ENCODE measurements at regions of chr1 and their contacts with region 1.

Region 1: GRCh38 chr1:18949686-18950400 is 6.6 kb downstream of the IFFO2 start:
- DNase-seq: peak; percentile 45
- H3K4me3 Mint-ChIP-seq: peak overlapping the region; percentile 75
- H3K27ac Mint-ChIP-seq: peak overlapping the region; percentile 93
- H3K4me1 Mint-ChIP-seq: peaks cover 95% of the 10 kb centered on the region
- H3K27me3 Mint-ChIP-seq: no peaks in the 10 kb centered on the region

Region 2: GRCh38 chr1:18965206-18966173 is 15.6 kb after region 1 on chr1:
- CTCF ChIA-PET with region 1: interaction called, 3 read pairs
- intact Hi-C with region 1: loop called (anchors 1 kb)
- DNase-seq: peak; percentile 86
- H3K4me3 Mint-ChIP-seq: no peak overlapping the region
- H3K27ac Mint-ChIP-seq: peak overlapping the region; percentile 77
- H3K4me1 Mint-ChIP-seq: peaks cover 12% of the 10 kb centered on the region
- H3K27me3 Mint-ChIP-seq: no peaks in the 10 kb centered on the region

Region 3: GRCh38 chr1:19010995-19011844 is 61.4 kb after region 1 on chr1:
- CTCF ChIA-PET with region 1: no interaction called
- intact Hi-C with region 1: loop called (anchors 1 kb)
- DNase-seq: peak; percentile 95
- H3K4me3 Mint-ChIP-seq: no peak overlapping the region
- H3K27ac Mint-ChIP-seq: peak overlapping the region; percentile 83
- H3K4me1 Mint-ChIP-seq: peaks cover 35% of the 10 kb centered on the region
- H3K27me3 Mint-ChIP-seq: no peaks in the 10 kb centered on the region

Region 4: DNA sequence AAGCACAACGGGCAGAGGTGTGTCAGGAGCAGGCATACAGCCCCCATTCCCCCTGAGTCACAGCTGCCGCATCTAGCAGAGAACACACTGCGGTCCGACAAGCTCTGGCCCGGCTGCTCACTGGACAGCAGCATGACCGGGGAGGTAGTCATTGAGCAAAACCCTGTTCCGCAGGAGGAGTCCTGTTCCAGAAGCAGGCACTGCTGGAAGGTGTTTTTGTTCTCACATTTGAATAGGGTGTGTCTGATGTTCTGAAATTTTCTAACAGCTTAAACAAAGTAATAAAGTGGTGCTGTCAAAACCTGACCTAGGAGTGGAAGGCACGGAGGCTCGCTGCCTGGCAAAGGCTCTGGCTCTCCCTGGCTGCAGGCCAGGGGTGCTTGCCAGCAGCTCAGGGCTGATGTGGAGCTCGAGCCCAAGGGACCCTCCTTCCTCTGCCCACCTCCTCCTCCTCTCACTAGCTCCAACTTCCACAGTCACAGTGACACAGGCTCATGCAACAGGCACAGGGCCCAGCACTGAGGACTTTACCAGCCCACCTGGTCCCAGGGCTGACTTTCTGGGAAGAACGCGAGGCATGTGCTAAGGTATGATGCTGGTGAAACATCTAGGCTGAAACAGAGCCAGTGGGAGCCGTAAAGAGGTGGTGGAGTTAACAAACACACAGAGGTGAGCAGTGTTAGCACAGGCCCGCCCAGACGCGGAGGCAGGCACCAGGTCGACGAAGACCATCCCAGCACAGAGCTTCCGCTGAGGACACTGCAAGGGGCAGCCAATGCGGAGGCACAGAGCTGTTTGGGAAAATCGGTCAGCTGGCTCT is 125.3 kb after region 1 on chr1:
- CTCF ChIA-PET with region 1: interaction called, 4 read pairs
- intact Hi-C with region 1: loop called (anchors 1 kb)
- DNase-seq: no peak
- H3K4me3 Mint-ChIP-seq: no peak overlapping the region
- H3K27ac Mint-ChIP-seq: peak overlapping the region; percentile 74
- H3K4me1 Mint-ChIP-seq: peaks cover 53% of the 10 kb centered on the region
- H3K27me3 Mint-ChIP-seq: no peaks in the 10 kb centered on the region

Region 5: DNA sequence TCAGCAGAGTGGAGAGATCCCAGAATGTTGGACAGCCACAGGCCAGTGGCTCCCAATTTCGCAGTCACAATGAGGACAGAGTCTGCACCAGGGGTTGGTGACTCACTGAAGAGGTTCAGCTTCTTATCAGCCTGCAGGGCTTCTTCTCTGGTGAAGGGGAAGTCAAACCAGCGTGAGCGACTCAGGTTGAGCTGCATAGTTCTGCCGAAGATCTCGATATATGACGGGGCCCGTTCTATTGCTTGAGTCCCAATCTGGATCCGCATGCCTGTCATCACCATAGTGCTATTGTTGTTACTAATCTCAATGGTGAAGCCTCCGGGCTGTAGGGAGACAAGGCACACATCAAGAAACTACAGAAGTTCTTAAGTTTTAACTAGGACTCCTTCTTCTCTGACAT is 201.7 kb after region 1 on chr1:
- CTCF ChIA-PET with region 1: no interaction called
- intact Hi-C with region 1: no loop called
- DNase-seq: no peak
- H3K4me3 Mint-ChIP-seq: no peak overlapping the region
- H3K27ac Mint-ChIP-seq: no peak overlapping the region
- H3K4me1 Mint-ChIP-seq: peaks cover 3% of the 10 kb centered on the region
- H3K27me3 Mint-ChIP-seq: no peaks in the 10 kb centered on the region

Region 6: GRCh38 chr1:19209990-19210771 is 260.3 kb after region 1 on chr1 and contains the start of gene UBR4:
- CTCF ChIA-PET with region 1: interaction called, 3 read pairs
- intact Hi-C with region 1: loop called (anchors 1 kb)
- DNase-seq: peak; percentile 97
- H3K4me3 Mint-ChIP-seq: peak within 1 kb of the TSS; percentile 90
- H3K27ac Mint-ChIP-seq: peak within 1 kb of the TSS; percentile 95
- H3K4me1 Mint-ChIP-seq: peaks cover 69% of the 10 kb centered on the region
- H3K27me3 Mint-ChIP-seq: no peaks in the 10 kb centered on the region
- total RNA-seq, gene UBR4: 165 to 169 TPM

Region 7: GRCh38 chr1:19468397-19468956 is 518.6 kb after region 1 on chr1:
- CTCF ChIA-PET with region 1: no interaction called
- intact Hi-C with region 1: loop called (anchors 5 kb)
- DNase-seq: peak; percentile 87
- H3K4me3 Mint-ChIP-seq: peak overlapping the region; percentile 37
- H3K27ac Mint-ChIP-seq: peak overlapping the region; percentile 88
- H3K4me1 Mint-ChIP-seq: peaks cover 89% of the 10 kb centered on the region
- H3K27me3 Mint-ChIP-seq: no peaks in the 10 kb centered on the region

Measured in activated naive CD4-positive, alpha-beta T cell treated with anti-CD3 and anti-CD28 coated beads for 36 hours (primary cell).